ENCODE measurements at regions of chr5 and their contacts with region 1.

Region 1: GRCh38 chr5:159915904-159916840 is at the start of gene ADRA1B:
- DNase-seq: peak; percentile 85
- ATAC-seq: peak; percentile 94
- total RNA-seq, gene ADRA1B: 2.7 TPM

Region 2: GRCh38 chr5:159331093-159331973 is 584.8 kb before region 1 on chr5:
- intact Hi-C with region 1: loop called (anchors 1 kb)
- DNase-seq: peak; percentile 85
- ATAC-seq: peak; percentile 92

Region 3: GRCh38 chr5:159444441-159445082 is 471.6 kb before region 1 on chr5:
- intact Hi-C with region 1: loop called (anchors 2 kb)
- DNase-seq: no peak
- ATAC-seq: no peak

Region 4: DNA sequence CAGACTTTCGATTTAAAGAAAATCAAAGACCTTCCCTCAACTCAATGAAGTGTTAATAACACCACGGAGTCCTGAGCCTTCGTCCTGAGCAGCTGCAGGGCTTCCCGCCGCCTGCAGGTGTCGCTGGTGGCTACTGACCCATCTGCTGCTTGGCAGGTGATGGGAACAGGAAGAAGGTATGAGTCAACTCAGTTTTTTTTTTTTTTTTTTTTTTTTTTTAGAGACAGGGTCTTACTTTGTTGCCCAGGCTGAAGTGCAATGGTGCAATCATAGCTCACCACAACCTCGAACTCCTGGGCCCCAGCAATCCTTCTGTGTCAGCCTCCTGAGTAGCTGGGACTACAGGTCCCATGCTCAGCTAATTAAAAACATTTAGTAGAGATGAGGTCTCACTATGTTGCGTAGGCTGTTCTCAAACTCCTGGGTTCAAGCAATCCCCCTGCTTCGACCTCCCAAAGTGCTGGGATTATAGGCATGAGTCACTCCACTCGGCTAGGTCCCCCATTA is 400.2 kb before region 1 on chr5:
- intact Hi-C with region 1: loop called (anchors 1 kb)
- DNase-seq: peak; percentile 76
- ATAC-seq: peak; percentile 62

Region 5: GRCh38 chr5:159531554-159532105 is 384.5 kb before region 1 on chr5:
- intact Hi-C with region 1: loop called (anchors 5 kb)
- DNase-seq: no peak
- ATAC-seq: no peak

Region 6: DNA sequence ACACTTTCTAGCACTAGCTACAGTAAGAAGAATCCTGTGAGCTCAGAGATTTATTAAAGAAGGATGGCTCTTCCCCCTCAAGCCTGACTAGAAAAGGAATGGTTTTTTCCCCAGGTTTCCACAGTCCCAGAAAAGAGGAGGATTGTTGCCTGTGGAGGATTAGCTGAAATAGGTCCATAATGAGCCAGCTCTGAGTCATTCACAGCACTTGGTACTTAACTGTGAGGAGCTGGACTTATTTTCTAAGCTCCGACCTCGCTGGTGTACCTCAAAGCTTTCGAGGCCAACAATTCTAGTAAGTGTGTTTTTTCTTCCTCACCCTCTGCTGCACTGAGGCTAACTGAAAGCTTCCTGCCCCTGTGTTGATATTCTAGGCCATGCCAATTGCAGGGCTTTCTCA is 363.4 kb before region 1 on chr5:
- intact Hi-C with region 1: no loop called
- DNase-seq: no peak
- ATAC-seq: no peak

Region 7: DNA sequence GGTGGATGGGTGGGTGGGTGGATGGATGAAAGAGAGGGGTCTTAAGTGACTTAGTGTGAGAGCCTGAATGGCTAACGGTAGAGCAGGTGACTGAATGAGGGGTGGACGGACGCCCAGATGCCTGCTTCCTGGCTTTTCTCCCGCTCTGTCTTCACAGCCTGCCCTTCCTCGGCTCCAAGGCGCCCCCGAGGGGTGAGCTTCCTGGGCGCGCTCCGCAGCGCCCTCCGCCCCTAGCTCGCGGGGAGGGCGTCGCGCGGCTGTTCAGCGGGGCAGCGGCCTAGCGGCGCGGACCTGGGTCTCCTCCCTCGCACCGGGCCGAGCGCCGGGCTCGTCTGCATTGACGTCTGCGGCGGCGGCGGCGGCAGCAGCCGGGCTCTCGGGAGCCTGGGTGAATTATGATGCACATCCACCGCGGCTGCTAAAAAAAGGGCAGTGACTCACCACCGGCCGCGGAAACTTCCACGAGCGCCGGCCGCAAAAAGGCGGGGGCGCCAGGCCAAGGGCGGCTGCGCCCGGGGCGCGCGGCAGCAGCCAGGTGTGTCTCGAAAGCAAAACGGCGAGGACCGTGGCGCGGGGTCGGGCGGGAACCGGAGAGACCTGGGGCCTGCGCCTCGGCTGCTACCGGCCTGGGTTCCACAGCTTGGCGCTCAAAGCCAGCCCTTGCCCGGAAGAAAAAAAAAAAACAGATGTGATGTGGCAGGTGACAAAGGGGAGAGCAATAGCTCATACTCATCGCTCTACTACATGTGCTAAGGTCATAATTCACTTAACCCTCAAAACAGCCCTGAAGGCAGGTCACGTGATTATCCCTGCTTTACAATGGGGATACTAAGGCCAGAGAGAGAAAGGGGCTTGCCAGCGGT is 142.9 kb before region 1 on chr5:
- intact Hi-C with region 1: loop called (anchors 5 kb)
- DNase-seq: peak; percentile 88
- ATAC-seq: peak; percentile 96

Region 8: DNA sequence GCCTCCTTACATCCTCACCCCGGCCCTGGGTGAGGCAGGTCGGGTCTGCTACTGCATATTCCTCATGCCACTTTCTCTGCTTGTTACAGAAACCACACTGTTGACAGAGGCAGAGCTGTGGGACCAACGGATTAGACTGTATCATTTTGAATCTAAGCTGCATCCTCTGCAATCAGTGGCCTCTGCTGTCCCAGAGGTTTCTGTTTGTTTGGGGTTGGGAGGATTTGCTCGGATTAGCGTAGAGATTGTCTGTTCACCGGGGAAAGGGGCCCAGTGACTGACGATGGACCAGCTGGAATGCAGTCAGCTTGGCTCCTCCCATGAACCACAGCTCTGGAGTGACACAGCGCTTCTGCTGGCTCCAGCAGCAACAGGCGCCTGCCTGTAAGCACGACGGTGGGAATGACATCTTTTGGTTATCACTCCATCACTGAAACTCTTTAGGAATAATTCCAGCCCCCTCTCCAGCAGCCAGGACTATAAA is 37.1 kb before region 1 on chr5:
- intact Hi-C with region 1: loop called (anchors 2 kb)
- DNase-seq: peak; percentile 80
- ATAC-seq: peak; percentile 89

Measured in Right ventricle myocardium inferior (tissue), 1 donor.